ENCODE measurements at regions of chr5 and their contacts with region 1.

Region 1: DNA sequence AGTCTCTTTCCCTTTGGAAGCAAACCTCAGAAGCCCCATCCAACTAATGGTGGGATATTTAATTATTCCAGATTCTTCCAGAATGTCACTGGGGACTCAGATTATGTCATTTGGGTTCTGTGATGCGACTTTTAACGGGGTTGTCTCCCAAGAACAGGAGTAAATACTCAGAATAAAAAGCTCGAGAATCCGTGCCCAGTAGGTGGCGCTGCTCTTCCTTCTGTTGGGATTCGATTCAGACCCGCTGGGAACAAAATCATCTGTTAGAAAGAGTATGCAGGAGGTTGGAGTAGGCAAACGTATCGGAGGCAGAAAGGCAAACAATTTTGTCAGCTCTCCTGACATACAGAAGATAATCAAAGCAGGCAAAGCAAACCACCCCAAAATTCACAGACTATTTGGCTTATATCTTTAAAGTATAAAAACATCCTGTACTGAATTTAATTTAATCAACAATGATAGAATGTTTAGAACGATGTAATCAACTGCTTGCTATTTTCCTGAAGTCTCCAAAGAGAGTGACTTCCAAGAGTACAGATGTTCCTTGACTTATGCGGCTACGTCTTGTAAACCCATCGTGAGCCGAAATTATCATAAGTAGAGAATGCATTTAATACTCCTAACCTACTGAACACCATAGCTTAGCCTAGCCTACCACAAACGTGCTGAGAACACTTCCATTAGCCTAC is 169.8 kb upstream of the RAI14 start:
- DNase-seq: peak; percentile 60 to 90
- ATAC-seq: peak; percentile 70

Region 2: DNA sequence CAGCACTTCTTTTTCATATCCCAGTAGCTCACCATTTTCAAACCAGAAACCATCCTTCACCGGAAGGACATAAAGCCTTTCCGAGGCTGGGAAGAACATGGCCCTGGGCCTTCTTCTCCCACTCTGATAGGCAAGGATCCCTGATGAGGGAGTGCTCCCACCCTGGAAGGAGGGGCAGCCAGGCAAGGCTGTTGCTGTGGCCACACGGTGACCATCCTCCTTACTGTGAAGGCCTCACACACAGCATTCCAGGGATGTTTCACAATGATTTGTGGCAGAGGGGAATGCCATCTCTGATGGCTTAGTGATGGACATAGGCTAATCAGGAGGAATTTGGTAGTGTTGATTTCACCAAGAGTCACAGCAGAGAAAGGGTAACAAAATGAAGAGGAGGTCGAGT is 725.2 kb before region 1 on chr5:
- intact Hi-C with region 1: no loop called
- DNase-seq: no peak
- ATAC-seq: no peak

Region 3: GRCh38 chr5:34522599-34523386 is 36.5 kb after region 1 on chr5:
- intact Hi-C with region 1: no loop called
- DNase-seq: peak; percentile 67 to 73
- ATAC-seq: peak; percentile 92

Region 4: DNA sequence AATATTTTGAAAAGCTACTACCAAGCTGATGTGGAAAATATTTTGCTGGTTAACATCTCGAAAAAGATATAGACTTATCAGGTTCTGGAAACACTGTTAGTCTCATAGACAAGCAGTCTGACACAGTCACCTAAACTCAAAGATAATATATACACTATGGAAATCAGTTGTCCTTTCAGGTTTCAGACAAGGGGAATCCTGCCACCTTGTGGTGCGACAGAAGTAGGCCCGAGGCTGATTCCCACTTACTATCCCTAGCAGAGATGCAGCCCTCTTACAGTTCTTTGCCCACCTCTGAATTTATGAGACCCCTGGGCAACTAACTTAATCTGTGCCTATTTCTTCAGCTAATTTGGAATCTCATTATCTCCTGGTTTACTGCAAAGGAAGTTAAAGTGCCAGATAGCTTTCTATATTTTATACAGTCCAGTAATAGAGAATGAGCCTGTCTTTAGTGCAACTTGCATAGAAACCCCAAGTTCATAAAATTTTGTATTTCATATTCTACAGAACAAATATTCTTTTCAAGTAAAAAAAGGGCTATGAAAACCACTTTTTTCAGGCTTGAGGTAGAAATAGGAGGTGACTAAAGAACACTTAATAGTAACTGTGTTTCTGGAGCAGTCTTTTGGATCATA is 412.1 kb after region 1 on chr5:
- intact Hi-C with region 1: loop called in 1 of 2 experiments (anchors 5 kb)
- DNase-seq: peak; percentile 49 to 70
- ATAC-seq: peak; percentile 92

Measured in left colon (tissue), 2 donors.